SK-N-SH (cell line): ENCODE measurements at regions of chr2 and their contacts with region 1.

Region 1: DNA sequence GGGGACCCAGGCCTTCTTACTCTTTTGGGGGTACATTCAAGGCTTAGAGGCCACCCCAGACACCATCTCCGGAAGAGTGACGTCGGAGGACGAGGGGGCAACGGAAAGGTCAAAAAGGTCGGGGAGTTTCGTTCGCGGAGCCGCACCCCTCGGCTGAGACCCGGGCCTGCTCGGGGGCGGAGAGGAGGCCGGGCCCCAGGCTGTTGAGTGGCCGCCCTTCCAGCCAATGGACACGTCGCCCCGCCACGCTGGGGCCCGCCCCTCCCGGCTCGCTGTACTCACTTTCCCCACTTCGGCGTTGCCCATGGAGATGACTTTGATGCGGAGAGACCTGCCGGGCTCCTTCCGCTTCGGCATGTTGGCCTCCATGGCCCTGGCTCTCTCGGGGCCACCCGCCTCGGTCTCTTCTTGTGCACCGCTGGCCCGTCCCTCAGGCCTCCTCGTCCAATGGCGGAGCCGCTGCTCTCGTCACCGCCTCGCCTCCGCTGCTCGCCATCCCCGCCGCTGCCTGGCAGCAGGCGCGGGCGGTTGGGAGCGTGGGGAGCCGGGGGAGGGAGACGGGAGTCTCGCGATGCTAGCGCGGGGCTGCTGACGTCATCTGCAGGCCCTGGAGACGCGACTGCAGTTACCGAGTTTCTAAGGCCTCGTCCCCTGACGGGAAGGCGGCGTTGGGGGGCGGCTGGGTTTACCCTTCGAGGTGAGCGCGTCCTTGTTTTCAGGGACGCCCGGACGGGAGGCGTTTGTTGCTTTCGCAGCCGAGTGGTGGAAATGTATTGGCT is at the start of gene DNAJC27:
- DNase-seq: peak; percentile 99
- H3K4me3 ChIP-seq: peak within 1 kb of the TSS; percentile 87 to 93
- H3K27ac ChIP-seq: peak within 1 kb of the TSS; percentile 94 to 95
- H3K4me1 ChIP-seq: peaks cover 5 to 12% of the 10 kb centered on the region in 2 experiments; a peak in 3 of 4 replicates
- H3K27me3 ChIP-seq: no peaks in the 10 kb centered on the region
- CTCF ChIP-seq: no peak
- EP300 ChIP-seq: no peak; a peak in 1 of 4 replicates
- RAD21 ChIP-seq: no peak
- polyA plus RNA-seq, gene DNAJC27: 2.4 and 3.6 TPM in 2 replicates

Region 2: GRCh38 chr2:24845691-24846090 is 126.0 kb before region 1 on chr2:
- CTCF ChIA-PET with region 1: no interaction called
- POLR2A ChIA-PET with region 1: no interaction called
- DNase-seq: no peak
- H3K4me3 ChIP-seq: no peak overlapping the region
- H3K27ac ChIP-seq: no peak overlapping the region
- H3K4me1 ChIP-seq: no peaks in the 10 kb centered on the region
- H3K27me3 ChIP-seq: no peaks in the 10 kb centered on the region
- CTCF ChIP-seq: no peak
- EP300 ChIP-seq: no peak
- RAD21 ChIP-seq: no peak

Region 3: DNA sequence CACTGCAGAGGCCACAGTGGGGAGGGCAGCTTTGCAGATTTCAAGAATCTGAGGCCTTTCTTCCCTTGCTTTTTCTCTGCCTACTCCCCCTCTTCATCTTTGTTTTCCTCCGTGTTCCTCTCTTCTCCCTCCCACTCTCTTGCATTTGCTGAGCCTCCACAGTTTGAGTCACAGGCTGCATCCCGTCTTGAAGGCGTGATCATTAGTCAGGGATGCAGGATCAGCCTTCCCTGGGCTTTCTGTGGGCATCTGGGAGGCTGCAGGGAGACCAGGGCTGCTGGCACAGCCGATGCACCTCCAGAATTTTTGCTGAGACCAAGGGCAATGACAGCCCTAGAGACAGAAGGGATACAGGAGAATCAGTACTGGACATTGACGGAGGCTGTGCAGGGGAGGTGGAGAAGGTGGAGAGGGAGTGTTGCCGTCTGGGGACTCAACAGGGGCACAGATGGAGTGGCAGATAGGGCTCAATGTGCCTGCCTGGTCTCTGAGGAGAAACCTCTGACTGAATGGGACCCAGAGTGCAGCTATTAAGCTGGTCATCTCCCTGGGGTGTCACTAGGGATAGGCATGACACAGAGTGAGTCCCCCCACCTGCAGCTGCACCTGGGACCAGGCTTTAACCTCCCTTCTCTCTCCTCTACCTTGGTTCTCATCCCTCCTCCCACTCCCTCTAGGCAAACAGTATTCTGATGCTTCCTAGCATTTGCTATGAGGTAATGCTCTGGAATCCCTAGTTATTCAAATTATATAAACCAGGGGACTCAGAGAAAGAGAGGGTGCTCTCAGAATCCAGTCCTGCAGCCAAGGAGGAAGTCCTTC is 29.0 kb after region 1 on chr2:
- CTCF ChIA-PET with region 1: interaction called, 32 read pairs
- POLR2A ChIA-PET with region 1: no interaction called
- DNase-seq: peak; percentile 36
- H3K4me3 ChIP-seq: 0 out of 4 replicates have a peak overlapping the region, but pooled peaks of 1 of the 2 experiments have one; percentile 12
- H3K27ac ChIP-seq: peak overlapping the region in 1 of 2 experiments; percentile 70; a peak in 2 of 4 replicates
- H3K4me1 ChIP-seq: peaks cover 9 to 10% of the 10 kb centered on the region in 2 experiments; a peak in 3 of 4 replicates
- H3K27me3 ChIP-seq: no peaks in the 10 kb centered on the region
- CTCF ChIP-seq: no peak
- EP300 ChIP-seq: no peak
- RAD21 ChIP-seq: no peak

Region 4: GRCh38 chr2:25041928-25042320 is 70.2 kb after region 1 on chr2 and contains the start of gene EFR3B:
- CTCF ChIA-PET with region 1: interaction called, 49 read pairs
- POLR2A ChIA-PET with region 1: interaction called, 3 read pairs
- DNase-seq: peak; percentile 100
- H3K4me3 ChIP-seq: peak within 1 kb of the TSS; percentile 82 to 89
- H3K27ac ChIP-seq: peak within 1 kb of the TSS; percentile 51 to 89
- H3K4me1 ChIP-seq: peaks cover 11 to 21% of the 10 kb centered on the region in 2 experiments; a peak in 3 of 4 replicates
- H3K27me3 ChIP-seq: no peaks in the 10 kb centered on the region
- CTCF ChIP-seq: no peak
- EP300 ChIP-seq: peak in 1 of 2 experiments; percentile 7; a peak in 1 of 4 replicates
- RAD21 ChIP-seq: no peak; the same call in 1 of the 2 replicates
- polyA plus RNA-seq, gene EFR3B: 1.5 and 1.9 TPM in 2 replicates

Region 5: DNA sequence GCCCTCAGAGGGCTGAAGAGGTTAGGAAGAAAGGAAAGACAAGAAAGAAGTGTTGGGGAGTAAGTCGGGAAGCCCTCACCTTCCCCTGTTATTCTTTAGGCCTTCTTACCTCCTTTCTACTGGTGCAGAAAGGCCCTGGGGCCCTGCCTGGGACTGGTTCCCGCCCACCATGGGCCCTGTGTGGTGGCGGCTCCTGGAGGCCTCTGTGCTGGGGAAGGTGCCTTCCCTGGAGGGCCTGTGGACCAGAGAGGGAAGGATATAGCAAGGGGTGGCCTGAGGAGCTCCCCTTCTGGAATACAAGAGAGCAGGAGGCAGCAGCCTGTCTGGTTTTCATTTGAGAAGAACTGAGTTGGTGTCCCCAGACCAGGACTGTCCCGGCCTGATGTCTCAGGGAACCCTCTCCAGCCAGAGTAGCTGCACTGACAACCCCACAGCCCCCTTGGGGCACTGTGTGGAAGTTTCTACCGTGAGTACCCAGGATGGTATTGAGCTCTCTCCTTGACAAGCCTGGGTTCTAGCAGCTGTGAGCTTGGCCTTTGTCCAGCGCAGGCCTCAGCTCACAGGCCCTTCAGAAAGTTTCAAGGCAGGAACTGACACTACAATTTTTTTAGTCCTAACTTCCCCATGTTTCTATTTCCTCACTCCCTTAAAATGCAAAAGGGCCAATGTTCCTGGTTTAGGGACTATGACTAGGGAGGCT is 117.2 kb after region 1 on chr2:
- CTCF ChIA-PET with region 1: interaction called, 26 read pairs
- POLR2A ChIA-PET with region 1: no interaction called
- DNase-seq: no peak
- H3K4me3 ChIP-seq: no peak overlapping the region
- H3K27ac ChIP-seq: no peak overlapping the region; a peak in 1 of 4 replicates
- H3K4me1 ChIP-seq: peaks cover 0 to 25% of the 10 kb centered on the region in 2 experiments; a peak in 1 of 4 replicates
- H3K27me3 ChIP-seq: no peaks in the 10 kb centered on the region
- CTCF ChIP-seq: no peak
- EP300 ChIP-seq: no peak
- RAD21 ChIP-seq: no peak

Region 6: GRCh38 chr2:25131567-25132298 is 160.0 kb after region 1 on chr2:
- CTCF ChIA-PET with region 1: interaction called, 519 read pairs
- POLR2A ChIA-PET with region 1: interaction called, 17 read pairs
- DNase-seq: no peak
- H3K4me3 ChIP-seq: no peak overlapping the region
- H3K27ac ChIP-seq: no peak overlapping the region
- H3K4me1 ChIP-seq: peaks cover 0 to 3% of the 10 kb centered on the region in 2 experiments; a peak in 1 of 4 replicates
- H3K27me3 ChIP-seq: no peaks in the 10 kb centered on the region
- CTCF ChIP-seq: no peak
- EP300 ChIP-seq: no peak
- RAD21 ChIP-seq: no peak

Region 7: DNA sequence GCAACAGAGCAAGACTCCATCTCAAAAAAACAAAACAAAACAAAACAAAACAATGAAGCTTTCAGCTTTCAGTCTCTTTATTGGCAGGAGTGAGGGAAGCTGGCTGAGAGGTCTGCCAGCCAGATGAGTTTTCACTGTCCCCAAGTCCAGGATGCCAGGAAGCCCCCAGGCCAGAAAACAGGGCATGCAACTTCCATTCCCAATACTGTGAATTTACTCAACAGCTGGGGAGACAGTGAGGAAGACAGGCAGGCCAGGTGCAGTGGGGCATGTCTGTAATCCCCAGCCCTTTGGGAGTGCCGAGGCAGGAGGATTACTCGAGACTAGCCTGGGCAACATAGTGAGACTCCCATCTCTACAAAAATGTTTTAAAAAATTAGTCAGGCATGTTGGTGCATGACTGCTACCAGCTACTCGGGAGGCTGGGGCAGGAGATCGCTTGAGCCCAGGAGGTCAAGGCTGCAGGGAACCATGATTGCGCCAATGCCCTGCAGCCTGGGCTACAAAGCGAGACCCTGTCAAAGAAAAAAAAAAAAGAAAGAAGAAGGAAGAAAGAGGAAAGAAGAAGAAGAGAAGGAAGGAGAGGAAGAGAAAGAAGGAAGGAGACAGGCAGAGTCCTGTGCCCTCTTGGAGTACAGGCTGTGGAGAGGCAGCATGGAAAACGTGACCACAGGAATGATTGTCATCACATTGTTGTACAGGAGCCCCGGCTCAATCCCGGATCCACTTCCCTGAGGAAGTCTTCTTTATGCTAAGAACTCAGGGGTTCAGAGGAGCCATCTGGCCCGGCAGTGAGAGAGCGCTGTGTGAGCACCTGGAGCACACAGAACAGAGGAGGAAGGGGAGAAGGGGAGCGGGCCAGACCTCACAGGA is 225.8 kb after region 1 on chr2:
- CTCF ChIA-PET with region 1: interaction called, 58 read pairs
- POLR2A ChIA-PET with region 1: no interaction called
- DNase-seq: no peak
- H3K4me3 ChIP-seq: no peak overlapping the region
- H3K27ac ChIP-seq: no peak overlapping the region
- H3K4me1 ChIP-seq: peaks cover 0 to 8% of the 10 kb centered on the region in 2 experiments; a peak in 1 of 4 replicates
- H3K27me3 ChIP-seq: no peaks in the 10 kb centered on the region
- CTCF ChIP-seq: no peak
- EP300 ChIP-seq: no peak
- RAD21 ChIP-seq: no peak